Naive thymus-derived CD4-positive, alpha-beta T cell (primary cell): ENCODE measurements at regions of chr3 and their contacts with region 1.

Region 1: DNA sequence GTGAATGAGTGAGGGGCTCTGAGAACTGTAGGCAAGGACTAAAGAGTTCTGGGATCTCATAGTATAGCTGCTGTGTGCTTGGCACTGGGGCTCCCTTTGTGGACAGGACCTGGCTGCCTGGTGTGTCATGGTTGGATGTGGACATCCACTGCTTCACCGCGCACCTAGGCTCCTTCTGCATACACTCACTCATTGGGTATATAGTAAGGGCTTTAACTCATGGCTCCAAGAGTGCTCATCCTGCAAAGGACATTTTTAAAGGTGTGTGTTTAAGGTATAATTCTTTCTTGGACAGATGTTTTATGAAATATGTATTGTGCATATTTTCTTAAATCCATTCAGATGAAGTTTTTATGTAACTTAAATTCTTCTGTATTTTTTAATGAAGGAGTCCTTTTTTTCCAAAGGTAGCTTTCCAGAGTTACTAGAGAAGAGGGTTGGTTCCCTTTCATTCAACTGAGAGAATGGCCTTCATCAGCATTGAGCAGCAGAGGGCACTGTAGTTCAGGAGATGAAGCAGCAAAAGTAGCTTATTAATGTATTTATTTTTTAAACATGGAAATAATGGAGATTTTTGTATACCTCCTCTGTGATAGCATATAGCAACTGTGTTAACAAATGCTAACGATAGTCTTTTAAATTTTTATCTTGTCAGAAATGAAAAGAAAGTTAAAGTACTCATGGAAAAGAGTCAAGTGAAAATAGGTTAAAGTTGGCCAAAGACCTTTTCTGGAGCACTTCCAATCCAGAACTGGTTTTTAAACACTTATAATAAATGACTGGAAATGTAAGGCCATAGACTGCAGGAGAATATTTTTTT is 25.2 kb downstream of the OXNAD1 start:
- DNase-seq: peak in 6 of 9 donors; percentile 44 to 67 (median 62)
- ATAC-seq: peak; percentile 58
- H3K4me3 ChIP-seq: peak overlapping the region; percentile 67
- H3K4me3 Mint-ChIP-seq: peak overlapping the region; percentile 87 to 99 (median 96)
- H3K27ac ChIP-seq: peak overlapping the region; percentile 90
- H3K27ac Mint-ChIP-seq: peak overlapping the region; percentile 86 to 99 (median 97)
- H3K4me1 ChIP-seq: peaks cover 32 to 65% of the 10 kb centered on the region in 2 donors
- H3K4me1 Mint-ChIP-seq: peaks cover 38 to 77% (median 53%) of the 10 kb centered on the region in 7 donors
- H3K27me3 ChIP-seq: no peaks in the 10 kb centered on the region
- H3K27me3 Mint-ChIP-seq: no peaks in the 10 kb centered on the region

Region 2: DNA sequence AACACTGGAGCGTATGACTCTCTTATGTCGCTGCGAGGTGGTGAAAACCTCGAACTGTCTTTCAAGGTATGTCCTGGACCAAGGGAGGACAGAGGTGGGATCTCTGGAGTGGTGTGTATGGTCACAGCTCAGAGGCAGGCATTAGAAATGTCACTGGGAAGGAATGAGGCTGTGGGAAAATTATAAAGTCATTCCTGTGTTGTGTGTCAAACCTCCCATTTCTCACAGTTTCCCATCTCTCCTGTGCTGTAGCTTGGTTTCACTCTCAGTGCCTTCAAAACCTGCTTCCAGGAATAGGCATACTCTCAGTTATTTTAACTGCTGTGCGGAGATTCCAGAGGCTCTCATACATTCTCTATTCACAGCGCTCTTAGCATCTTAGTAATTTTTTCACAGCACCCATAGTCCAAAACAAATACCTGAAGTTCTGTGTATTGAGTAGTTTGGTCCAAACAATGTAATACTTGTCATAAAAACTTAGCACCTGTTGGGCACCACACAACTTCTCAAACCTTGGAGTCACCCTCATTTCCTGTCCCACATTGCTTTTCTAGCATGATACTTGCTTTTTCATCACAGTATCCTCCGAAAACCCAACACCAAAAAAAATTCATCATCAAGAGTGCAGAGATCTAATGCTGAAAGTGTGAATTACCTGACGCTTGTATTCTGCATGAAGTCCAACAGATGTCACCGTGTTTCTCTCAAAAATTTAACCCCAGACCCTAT is 78.9 kb before region 1 on chr3:
- CTCF ChIA-PET with region 1: no interaction called
- POLR2A ChIA-PET with region 1: no interaction called
- intact Hi-C with region 1: no loop called
- DNase-seq: no peak
- ATAC-seq: no peak
- H3K4me3 ChIP-seq: no peak overlapping the region
- H3K4me3 Mint-ChIP-seq: no peak overlapping the region
- H3K27ac ChIP-seq: no peak overlapping the region
- H3K27ac Mint-ChIP-seq: no peak overlapping the region
- H3K4me1 ChIP-seq: no peaks in the 10 kb centered on the region
- H3K4me1 Mint-ChIP-seq: no peaks in the 10 kb centered on the region
- H3K27me3 ChIP-seq: no peaks in the 10 kb centered on the region
- H3K27me3 Mint-ChIP-seq: no peaks in the 10 kb centered on the region

Region 3: DNA sequence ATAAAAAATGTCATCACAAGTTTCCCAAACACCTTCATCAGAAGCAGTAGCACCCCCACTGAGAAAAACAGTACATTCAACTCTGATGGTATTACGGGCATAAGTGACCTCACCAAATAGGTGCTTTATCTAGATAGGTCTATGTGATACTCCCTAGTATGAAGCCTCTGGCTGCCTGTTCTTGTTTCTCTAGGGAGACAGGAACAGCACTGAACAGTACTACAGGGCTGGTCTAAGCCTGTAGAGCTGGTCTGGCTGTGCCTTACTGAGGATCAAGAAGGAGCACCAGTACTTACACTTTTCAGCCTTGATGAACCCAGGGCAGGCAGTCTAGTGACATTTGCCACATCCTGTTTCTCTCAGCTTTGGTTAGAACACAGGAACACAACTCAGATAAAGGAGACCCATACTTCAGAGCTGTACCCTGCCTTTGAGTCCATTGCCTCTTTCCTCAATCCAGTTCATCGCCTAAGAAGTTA is 10.7 kb after region 1 on chr3:
- CTCF ChIA-PET with region 1: interaction called, 48 read pairs
- POLR2A ChIA-PET with region 1: interaction called, 226 read pairs
- intact Hi-C with region 1: loop called (anchors 1 kb)
- DNase-seq: peak in 7 of 9 donors; percentile 68 to 86 (median 82)
- ATAC-seq: peak; percentile 86
- H3K4me3 ChIP-seq: peak overlapping the region; percentile 48
- H3K4me3 Mint-ChIP-seq: peak overlapping the region; percentile 78 to 96 (median 92)
- H3K27ac ChIP-seq: peak overlapping the region; percentile 66
- H3K27ac Mint-ChIP-seq: peak overlapping the region; percentile 86 to 98 (median 94)
- H3K4me1 ChIP-seq: peaks cover 78 to 95% of the 10 kb centered on the region in 2 donors
- H3K4me1 Mint-ChIP-seq: peaks cover 61 to 99% (median 96%) of the 10 kb centered on the region in 7 donors
- H3K27me3 ChIP-seq: no peaks in the 10 kb centered on the region
- H3K27me3 Mint-ChIP-seq: no peaks in the 10 kb centered on the region

Region 4: GRCh38 chr3:16338999-16339398 is 48.8 kb after region 1 on chr3:
- CTCF ChIA-PET with region 1: interaction called, 12 read pairs
- POLR2A ChIA-PET with region 1: interaction called, 5 read pairs
- intact Hi-C with region 1: no loop called
- DNase-seq: peak in 1 of 9 donors; percentile 29
- ATAC-seq: peak; percentile 76
- H3K4me3 ChIP-seq: no peak overlapping the region
- H3K4me3 Mint-ChIP-seq: peak overlapping the region in 7 of 10 donors; percentile 0 to 70 (median 46)
- H3K27ac ChIP-seq: peak overlapping the region; percentile 62
- H3K27ac Mint-ChIP-seq: peak overlapping the region; percentile 69 to 92 (median 81)
- H3K4me1 ChIP-seq: peaks cover 22% of the 10 kb centered on the region in 2 donors
- H3K4me1 Mint-ChIP-seq: peaks cover 48 to 87% (median 81%) of the 10 kb centered on the region in 7 donors
- H3K27me3 ChIP-seq: no peaks in the 10 kb centered on the region
- H3K27me3 Mint-ChIP-seq: no peaks in the 10 kb centered on the region

Region 5: GRCh38 chr3:16482770-16483531 is 192.7 kb after region 1 on chr3:
- CTCF ChIA-PET with region 1: interaction called, 3 read pairs
- POLR2A ChIA-PET with region 1: interaction called, 5 read pairs
- intact Hi-C with region 1: loop called in 1 of 2 experiments (anchors 1 kb)
- DNase-seq: peak in 8 of 9 donors; percentile 14 to 49 (median 43)
- ATAC-seq: peak; percentile 87
- H3K4me3 ChIP-seq: no peak overlapping the region
- H3K4me3 Mint-ChIP-seq: peak overlapping the region; percentile 61 to 90 (median 76)
- H3K27ac ChIP-seq: peak overlapping the region; percentile 72
- H3K27ac Mint-ChIP-seq: peak overlapping the region; percentile 80 to 99 (median 91)
- H3K4me1 ChIP-seq: peaks cover 27 to 61% of the 10 kb centered on the region in 2 donors
- H3K4me1 Mint-ChIP-seq: peaks cover 47 to 88% (median 80%) of the 10 kb centered on the region in 7 donors
- H3K27me3 ChIP-seq: no peaks in the 10 kb centered on the region
- H3K27me3 Mint-ChIP-seq: no peaks in the 10 kb centered on the region

Region 6: GRCh38 chr3:16550676-16551341 is 260.6 kb after region 1 on chr3:
- CTCF ChIA-PET with region 1: interaction called, 9 read pairs
- POLR2A ChIA-PET with region 1: interaction called, 9 read pairs
- intact Hi-C with region 1: loop called (anchors 1 kb)
- DNase-seq: peak; percentile 36 to 82 (median 76)
- ATAC-seq: peak; percentile 98
- H3K4me3 ChIP-seq: no peak overlapping the region
- H3K4me3 Mint-ChIP-seq: peak overlapping the region in 1 of 10 donors; percentile 10
- H3K27ac ChIP-seq: no peak overlapping the region
- H3K27ac Mint-ChIP-seq: peak overlapping the region in 5 of 9 donors; percentile 16 to 67 (median 36)
- H3K4me1 ChIP-seq: peaks cover 0 to 4% of the 10 kb centered on the region in 2 donors
- H3K4me1 Mint-ChIP-seq: peaks cover 6 to 15% (median 7%) of the 10 kb centered on the region in 7 donors
- H3K27me3 ChIP-seq: no peaks in the 10 kb centered on the region
- H3K27me3 Mint-ChIP-seq: peaks cover 0 to 11% (median 9%) of the 10 kb centered on the region in 5 donors